ENCODE measurements at regions of chr22 and their contacts with region 1.

Region 1: DNA sequence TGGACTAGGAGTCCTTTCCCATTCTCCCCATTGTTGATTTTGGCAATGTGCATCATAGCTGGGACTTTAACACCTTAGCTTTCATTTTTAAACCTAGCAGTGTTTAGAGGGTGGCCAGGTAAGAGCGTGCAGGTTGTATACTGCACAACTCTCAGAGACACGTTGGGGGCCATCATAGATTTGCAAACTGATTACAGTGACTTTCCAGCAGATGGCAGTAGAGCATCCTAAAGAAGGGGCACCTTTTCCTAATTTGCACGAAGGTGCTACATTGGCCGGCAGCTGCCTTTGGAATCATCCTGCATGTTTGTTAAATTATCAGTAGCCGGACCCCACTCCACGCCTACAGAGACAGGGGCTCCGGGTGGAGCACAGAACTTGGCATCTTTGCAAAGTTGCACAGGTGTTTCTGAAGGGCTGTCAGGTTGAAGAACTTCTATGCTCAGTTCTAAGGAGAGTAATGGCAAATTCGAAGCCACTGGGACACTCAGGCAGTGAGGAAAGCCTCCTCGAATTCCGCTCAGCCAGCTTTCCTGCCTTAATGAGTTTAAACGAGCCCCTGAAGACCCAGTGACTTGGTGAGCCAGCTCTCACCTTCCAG is 7.7 kb downstream of the LHFPL7 start:
- DNase-seq: peak; percentile 40 to 42
- ATAC-seq: peak; percentile 65 to 78; a peak in 4 of 6 replicates
- H3K4me3 ChIP-seq: no peak overlapping the region
- H3K27ac ChIP-seq: no peak overlapping the region
- H3K4me1 ChIP-seq: no peaks in the 10 kb centered on the region
- CTCF ChIP-seq: peak; percentile 70
- EP300 ChIP-seq: no peak
- POLR2A ChIP-seq: no peak
- RAD21 ChIP-seq: peak; percentile 64 to 74

Region 2: DNA sequence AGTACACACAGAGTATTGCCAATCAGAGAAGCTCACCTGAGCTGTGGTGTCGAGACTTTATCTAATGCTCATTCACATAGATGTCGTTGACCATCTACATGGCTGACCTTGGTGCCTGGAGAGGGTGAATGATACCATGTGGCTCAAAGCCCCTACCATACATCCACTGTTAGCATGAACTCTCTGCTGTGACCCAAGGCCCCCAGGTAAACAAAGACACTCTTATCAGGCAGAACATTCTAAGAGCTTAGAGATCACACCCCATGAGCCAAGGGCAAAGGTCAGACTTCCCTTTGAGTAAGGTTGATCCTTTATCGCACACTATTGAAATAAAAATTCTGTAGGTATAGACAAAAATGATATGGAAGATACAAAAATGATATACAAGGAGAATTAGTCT is 149.3 kb before region 1 on chr22:
- CTCF ChIA-PET with region 1: no interaction called
- POLR2A ChIA-PET with region 1: no interaction called
- DNase-seq: no peak
- ATAC-seq: no peak
- H3K4me3 ChIP-seq: no peak overlapping the region
- H3K27ac ChIP-seq: no peak overlapping the region
- H3K4me1 ChIP-seq: no peaks in the 10 kb centered on the region
- CTCF ChIP-seq: no peak
- EP300 ChIP-seq: no peak
- POLR2A ChIP-seq: no peak
- RAD21 ChIP-seq: no peak

Region 3: DNA sequence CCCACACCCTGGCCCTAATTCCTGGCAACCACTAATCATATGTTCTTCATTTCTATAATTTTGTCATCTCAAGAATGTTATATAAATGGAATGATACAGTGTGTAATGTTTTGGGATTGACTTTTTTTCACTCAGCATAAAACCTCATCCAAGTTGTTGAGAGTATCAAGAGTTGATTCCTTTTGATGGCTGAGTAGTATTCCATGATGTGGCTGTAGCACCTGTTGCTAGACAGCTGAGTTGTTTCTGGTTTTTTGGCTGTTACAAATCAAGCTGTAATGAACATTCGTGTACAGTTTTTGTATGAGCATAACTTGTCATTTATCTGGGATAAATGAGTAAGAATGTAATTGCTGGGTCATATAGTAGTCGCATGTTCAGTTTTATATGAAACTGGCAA is 51.6 kb before region 1 on chr22:
- CTCF ChIA-PET with region 1: no interaction called
- POLR2A ChIA-PET with region 1: no interaction called
- DNase-seq: no peak
- ATAC-seq: no peak
- H3K4me3 ChIP-seq: no peak overlapping the region
- H3K27ac ChIP-seq: no peak overlapping the region
- H3K4me1 ChIP-seq: no peaks in the 10 kb centered on the region
- CTCF ChIP-seq: no peak
- EP300 ChIP-seq: no peak
- POLR2A ChIP-seq: no peak
- RAD21 ChIP-seq: no peak

Region 4: GRCh38 chr22:24926849-24927579 is 11.8 kb before region 1 on chr22:
- CTCF ChIA-PET with region 1: interaction called, 17 read pairs
- POLR2A ChIA-PET with region 1: no interaction called
- DNase-seq: no peak
- ATAC-seq: no peak
- H3K4me3 ChIP-seq: no peak overlapping the region
- H3K27ac ChIP-seq: no peak overlapping the region
- H3K4me1 ChIP-seq: no peaks in the 10 kb centered on the region
- CTCF ChIP-seq: no peak
- EP300 ChIP-seq: no peak
- POLR2A ChIP-seq: no peak
- RAD21 ChIP-seq: no peak

Region 5: GRCh38 chr22:24985826-24986214 is 47.0 kb after region 1 on chr22:
- CTCF ChIA-PET with region 1: interaction called, 12 read pairs
- POLR2A ChIA-PET with region 1: no interaction called
- DNase-seq: no peak
- ATAC-seq: no peak
- H3K4me3 ChIP-seq: no peak overlapping the region
- H3K27ac ChIP-seq: peak overlapping the region in 1 of 2 experiments; percentile 52; a peak in 1 of 6 replicates
- H3K4me1 ChIP-seq: peaks cover 32% of the 10 kb centered on the region
- CTCF ChIP-seq: no peak
- EP300 ChIP-seq: no peak
- POLR2A ChIP-seq: no peak
- RAD21 ChIP-seq: no peak

Region 6: DNA sequence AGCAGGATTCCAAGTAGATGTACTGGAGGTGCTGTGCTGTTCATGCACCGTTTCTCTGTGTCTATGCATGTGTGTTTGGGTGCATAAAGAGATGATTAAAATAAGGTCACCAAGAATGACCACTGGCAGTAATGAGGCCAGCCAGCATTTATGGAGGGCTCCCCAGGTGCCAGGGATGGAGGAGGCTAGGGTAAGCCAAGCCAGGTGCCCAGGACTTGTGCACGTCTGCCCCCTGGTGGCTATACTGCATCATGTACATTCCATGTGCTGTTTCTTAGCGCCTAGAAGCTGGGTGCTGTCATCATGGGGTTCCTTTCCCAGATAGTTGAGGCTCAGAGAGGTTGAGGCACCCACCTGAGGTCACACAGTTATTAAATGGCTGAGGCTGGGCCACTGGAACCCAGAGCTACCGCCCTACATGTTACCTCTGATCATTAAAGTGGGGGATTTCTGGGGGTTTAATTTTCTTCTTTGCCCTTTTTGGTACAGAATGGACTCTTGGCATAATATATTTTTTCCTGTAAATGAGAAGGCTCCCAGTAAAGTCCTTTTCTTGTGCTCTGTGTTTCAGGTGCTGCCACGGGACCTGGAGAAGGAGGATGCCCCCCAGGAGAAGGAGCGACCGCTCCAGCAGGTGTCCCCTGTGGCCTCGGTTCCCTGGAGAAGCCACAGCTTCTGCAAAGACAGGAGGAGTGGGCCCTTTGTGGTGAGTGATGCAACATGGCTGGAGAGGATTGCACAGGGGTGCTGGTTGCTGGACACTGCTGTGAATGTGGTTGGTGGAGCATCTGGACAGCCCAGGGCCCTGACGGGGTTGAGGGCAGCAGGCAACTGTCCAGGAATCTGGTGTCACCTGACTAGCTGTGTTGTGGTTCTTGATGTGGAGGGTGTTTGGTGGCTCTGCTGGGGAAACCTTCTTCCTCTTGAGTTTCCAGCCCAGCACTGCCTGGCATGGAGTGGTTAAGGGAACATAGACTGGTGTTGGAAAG is 110.1 kb after region 1 on chr22:
- CTCF ChIA-PET with region 1: interaction called, 112 read pairs
- POLR2A ChIA-PET with region 1: no interaction called
- DNase-seq: peak; percentile 64
- ATAC-seq: peak; percentile 92 to 96
- H3K4me3 ChIP-seq: no peak overlapping the region
- H3K27ac ChIP-seq: no peak overlapping the region
- H3K4me1 ChIP-seq: peaks cover 4% of the 10 kb centered on the region; the same call in 1 of the 3 replicates
- CTCF ChIP-seq: peak; percentile 75
- EP300 ChIP-seq: no peak
- POLR2A ChIP-seq: no peak
- RAD21 ChIP-seq: peak; percentile 80 to 86

Region 7: GRCh38 chr22:25078591-25078990 is 139.8 kb after region 1 on chr22:
- CTCF ChIA-PET with region 1: interaction called, 11 read pairs
- POLR2A ChIA-PET with region 1: no interaction called
- DNase-seq: no peak
- ATAC-seq: no peak
- H3K4me3 ChIP-seq: no peak overlapping the region
- H3K27ac ChIP-seq: no peak overlapping the region
- H3K4me1 ChIP-seq: no peaks in the 10 kb centered on the region
- CTCF ChIP-seq: no peak
- EP300 ChIP-seq: no peak
- POLR2A ChIP-seq: no peak
- RAD21 ChIP-seq: no peak